Cardiac septum (tissue), 1 donor: ENCODE measurements at regions of chr12 and their contacts with region 1.

Region 1: DNA sequence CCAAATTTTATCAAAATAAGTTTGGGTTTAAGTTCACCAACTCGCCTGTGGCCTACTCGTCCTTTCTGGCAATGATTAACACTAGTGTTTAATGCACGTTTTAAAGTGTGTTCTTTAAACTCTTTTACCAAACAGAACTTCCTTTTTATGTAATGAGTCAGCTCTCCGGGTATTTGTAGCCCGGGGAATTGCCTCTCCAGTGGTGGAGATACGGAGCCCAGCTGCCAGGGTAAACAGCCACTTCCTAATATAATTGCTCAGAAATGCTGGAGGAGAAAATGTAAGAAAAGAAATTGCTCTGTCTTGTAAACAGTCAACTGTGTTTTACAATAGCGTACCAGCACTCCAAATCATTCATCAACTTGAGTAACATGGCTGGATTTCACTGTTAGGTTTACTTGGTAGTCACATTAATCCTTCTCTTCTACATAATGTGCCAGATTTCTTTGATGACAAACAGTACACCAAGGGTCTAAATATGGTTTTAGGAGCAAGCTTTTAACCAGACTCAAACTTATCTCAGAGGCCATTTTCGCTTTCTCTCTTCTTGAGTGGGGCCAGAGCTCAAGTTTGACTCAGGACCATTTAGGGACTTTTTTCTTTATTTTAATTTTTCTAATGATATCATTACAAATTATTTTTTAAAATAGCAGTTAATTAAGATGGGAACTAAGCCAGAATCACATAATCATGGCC is 101.2 kb upstream of the SLC38A2 start:
- DNase-seq: peak; percentile 83

Region 2: DNA sequence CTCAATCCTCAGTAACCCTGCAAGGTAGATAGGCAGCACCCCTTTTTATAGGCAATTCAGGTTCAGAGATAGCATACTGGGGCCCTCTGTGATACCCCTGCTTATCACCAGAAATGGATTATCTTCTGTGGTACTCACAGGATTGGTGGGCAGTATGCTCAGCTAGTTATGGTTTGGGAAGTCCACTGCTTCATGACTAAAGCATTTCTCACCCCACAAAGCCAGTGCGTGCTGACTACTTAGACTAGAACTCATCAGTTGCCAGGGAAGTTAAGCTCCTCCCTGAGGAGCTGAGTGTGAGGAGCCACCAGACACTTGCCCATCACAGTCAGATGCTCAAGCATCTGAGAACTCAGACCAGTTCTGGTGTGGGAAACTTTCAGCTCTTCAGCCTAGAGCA is 559.7 kb before region 1 on chr12:
- intact Hi-C with region 1: no loop called
- DNase-seq: no peak

Region 3: GRCh38 chr12:46430340-46430948 is 43.3 kb before region 1 on chr12:
- intact Hi-C with region 1: loop called (anchors 2 kb)
- DNase-seq: no peak

Region 4: GRCh38 chr12:46722394-46723185 is 248.8 kb after region 1 on chr12:
- intact Hi-C with region 1: no loop called
- DNase-seq: no peak